ENCODE measurements at regions of chr10 and their contacts with region 1.

Region 1: DNA sequence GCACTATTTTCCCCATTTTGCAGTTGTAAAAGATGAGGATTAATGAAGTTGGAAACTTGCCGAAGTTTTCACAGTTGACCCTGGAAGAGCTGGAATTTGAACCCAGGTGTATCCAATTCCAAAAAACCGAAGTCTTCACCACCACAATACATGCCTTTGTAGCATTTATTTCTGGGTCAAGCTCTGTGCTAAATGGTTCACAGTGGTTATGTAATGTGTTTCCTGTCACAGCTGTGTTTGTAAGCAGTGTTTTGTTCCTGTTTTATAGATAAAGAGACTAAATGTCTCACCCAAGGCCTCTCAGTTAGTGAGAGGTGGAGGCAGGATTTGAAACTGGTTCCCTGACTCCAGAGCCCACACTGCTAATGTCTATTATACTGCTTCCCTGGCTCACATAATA is 17.6 kb downstream of the SFTPA2 start:
- DNase-seq: no peak
- ATAC-seq: no peak
- H3K4me3 ChIP-seq: no peak overlapping the region
- H3K27ac ChIP-seq: no peak overlapping the region
- H3K4me1 ChIP-seq: no peaks in the 10 kb centered on the region
- H3K27me3 ChIP-seq: 0 out of 2 replicates have a peak, but pooled peaks cover 4% of the 10 kb centered on the region
- CTCF ChIP-seq: no peak
- POLR2A ChIP-seq: no peak
- RAD21 ChIP-seq: no peak

Region 2: DNA sequence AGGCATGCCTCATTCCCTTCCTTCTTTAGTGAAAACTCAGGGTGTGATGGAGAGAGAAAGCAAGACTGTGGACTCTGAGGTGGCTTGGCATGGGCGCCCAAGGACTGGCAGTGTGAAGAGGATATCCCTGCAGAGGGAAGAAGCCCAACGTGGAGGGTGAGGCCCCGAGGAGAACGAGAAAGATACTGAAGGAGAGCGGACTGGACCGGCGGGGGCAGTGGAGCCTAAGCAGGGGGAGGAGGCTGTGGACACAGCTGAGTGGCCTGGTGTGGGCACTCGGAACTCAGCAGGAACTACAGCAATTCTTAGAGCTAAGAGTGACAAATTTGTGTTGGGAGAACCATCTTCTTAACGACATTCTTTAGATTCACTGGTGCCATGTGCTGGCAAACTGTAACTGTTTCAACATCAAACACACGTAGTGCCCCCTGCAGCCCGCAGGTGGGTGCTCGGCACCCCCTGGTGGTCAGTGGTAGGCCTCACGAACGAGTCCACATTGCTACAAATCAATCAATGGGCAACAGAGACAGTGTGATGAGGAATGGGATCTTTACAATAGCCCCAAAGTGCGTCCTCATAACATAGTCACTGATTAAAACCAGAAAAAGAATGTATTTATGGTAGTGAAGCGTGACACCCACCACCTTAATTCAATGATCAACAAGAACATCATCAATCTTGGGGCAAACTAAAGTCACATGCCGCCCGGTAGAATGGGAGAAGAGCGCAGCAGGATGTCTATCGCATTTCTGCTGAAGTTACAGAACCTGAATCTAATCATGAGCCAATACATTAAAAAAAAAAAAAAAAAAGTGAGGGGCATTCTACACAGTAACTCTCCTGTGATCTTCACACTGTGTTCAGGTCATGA is 66.1 kb after region 1 on chr10:
- CTCF ChIA-PET with region 1: no interaction called
- POLR2A ChIA-PET with region 1: no interaction called
- RAD21 ChIA-PET with region 1: no interaction called
- intact Hi-C with region 1: loop called (anchors 2 kb)
- DNase-seq: peak; percentile 24
- ATAC-seq: peak; percentile 90
- H3K4me3 ChIP-seq: no peak overlapping the region
- H3K27ac ChIP-seq: no peak overlapping the region
- H3K4me1 ChIP-seq: no peaks in the 10 kb centered on the region
- H3K27me3 ChIP-seq: no peaks in the 10 kb centered on the region
- CTCF ChIP-seq: peak; percentile 93 to 94 (median 94)
- POLR2A ChIP-seq: no peak
- RAD21 ChIP-seq: peak; percentile 79

Region 3: DNA sequence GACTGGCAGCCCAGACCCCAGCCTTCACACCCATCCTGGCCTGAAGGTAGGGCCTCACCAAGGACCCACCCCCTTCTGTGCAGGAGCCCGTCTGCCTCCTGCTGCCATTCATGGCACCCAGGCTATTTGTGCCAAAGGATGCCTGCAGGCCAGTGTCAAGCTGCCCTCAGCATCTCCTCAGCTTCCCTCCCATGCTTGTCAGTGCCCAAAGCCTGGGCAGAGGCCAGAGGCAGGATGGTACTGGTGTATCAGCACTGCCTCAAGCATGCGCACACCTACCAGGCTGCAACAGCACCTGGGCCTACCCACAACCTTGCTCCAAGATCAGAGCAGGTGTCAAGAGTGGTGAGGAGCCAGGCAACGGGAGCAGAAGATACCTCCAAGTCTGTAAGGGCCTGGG is 95.7 kb after region 1 on chr10:
- CTCF ChIA-PET with region 1: no interaction called
- POLR2A ChIA-PET with region 1: no interaction called
- RAD21 ChIA-PET with region 1: no interaction called
- intact Hi-C with region 1: no loop called
- DNase-seq: no peak
- ATAC-seq: no peak
- H3K4me3 ChIP-seq: no peak overlapping the region
- H3K27ac ChIP-seq: no peak overlapping the region
- H3K4me1 ChIP-seq: no peaks in the 10 kb centered on the region
- H3K27me3 ChIP-seq: no peaks in the 10 kb centered on the region
- CTCF ChIP-seq: no peak
- POLR2A ChIP-seq: no peak
- RAD21 ChIP-seq: no peak

Region 4: DNA sequence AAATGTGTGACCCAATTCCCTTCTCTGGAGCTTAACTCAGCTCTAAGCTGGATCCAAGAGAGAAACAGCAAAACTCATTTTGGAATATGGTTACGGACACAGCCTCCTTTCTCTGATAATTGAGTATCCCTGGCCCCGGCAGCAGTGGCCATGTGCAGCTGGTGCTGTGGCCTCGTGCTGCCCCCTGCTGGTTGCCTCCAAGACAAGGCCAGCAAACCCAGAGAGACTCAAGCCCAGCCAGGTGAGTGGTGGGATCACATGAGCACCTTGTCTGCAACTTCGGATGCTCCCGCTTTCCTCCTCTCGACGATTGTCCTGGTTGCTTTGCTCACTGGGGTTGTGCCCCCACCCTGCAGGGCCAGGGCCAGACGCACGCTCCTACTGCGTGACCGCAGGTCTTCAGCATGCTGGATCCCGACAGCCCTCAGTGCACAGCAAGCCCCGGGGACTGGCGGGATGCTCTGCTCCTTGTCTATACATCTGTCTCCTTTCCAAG is 386.8 kb after region 1 on chr10:
- CTCF ChIA-PET with region 1: no interaction called
- POLR2A ChIA-PET with region 1: no interaction called
- RAD21 ChIA-PET with region 1: no interaction called
- intact Hi-C with region 1: loop called (anchors 2 kb)
- DNase-seq: peak; percentile 62
- ATAC-seq: peak; percentile 98
- H3K4me3 ChIP-seq: no peak overlapping the region
- H3K27ac ChIP-seq: no peak overlapping the region
- H3K4me1 ChIP-seq: peaks cover 0 to 5% of the 10 kb centered on the region in 2 experiments; a peak in 1 of 4 replicates
- H3K27me3 ChIP-seq: 0 out of 2 replicates have a peak, but pooled peaks cover 5% of the 10 kb centered on the region
- CTCF ChIP-seq: peak; percentile 89 to 94 (median 93)
- POLR2A ChIP-seq: no peak
- RAD21 ChIP-seq: peak; percentile 97

Region 5: GRCh38 chr10:80612261-80612660 is 1069.6 kb after region 1 on chr10:
- CTCF ChIA-PET with region 1: no interaction called
- POLR2A ChIA-PET with region 1: no interaction called
- RAD21 ChIA-PET with region 1: no interaction called
- intact Hi-C with region 1: no loop called
- DNase-seq: no peak
- ATAC-seq: no peak
- H3K4me3 ChIP-seq: no peak overlapping the region
- H3K27ac ChIP-seq: no peak overlapping the region
- H3K4me1 ChIP-seq: no peaks in the 10 kb centered on the region
- H3K27me3 ChIP-seq: no peaks in the 10 kb centered on the region
- CTCF ChIP-seq: no peak
- POLR2A ChIP-seq: no peak
- RAD21 ChIP-seq: no peak

Measured in HCT116 (cell line).